ENCODE measurements at regions of chr18 and their contacts with region 1.

Region 1: DNA sequence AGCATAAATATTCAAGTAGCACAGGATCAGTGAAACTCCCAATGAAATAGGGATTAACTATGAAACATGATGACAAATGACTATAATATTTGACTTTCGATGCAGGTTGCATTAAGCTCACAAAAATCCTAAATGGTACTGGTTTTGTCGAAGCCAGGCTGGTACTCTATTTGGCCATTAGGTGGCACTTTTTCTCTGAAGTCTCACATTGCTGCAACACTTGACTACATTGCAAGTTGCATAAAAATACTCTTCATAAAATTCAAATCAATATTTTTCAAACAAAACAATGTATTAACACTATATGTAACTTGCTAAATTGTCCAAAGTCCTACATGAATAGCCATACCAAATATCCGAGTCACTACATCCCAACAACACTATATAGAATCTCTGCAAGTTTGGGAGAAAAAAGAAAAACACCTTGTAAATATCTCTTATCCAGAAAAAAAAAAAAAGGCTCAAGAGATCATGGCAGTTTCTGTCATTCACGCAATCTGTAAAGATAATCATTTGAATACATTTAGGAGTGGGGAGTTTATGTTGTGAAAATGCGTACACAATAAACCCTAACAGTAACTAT is 9.5 kb downstream of the RTTN start:
- DNase-seq: no peak
- ATAC-seq: peak; percentile 31
- H3K4me3 Mint-ChIP-seq: no peak overlapping the region
- H3K27ac Mint-ChIP-seq: no peak overlapping the region
- H3K4me1 Mint-ChIP-seq: peaks cover 48% of the 10 kb centered on the region
- H3K27me3 Mint-ChIP-seq: no peaks in the 10 kb centered on the region

Region 2: DNA sequence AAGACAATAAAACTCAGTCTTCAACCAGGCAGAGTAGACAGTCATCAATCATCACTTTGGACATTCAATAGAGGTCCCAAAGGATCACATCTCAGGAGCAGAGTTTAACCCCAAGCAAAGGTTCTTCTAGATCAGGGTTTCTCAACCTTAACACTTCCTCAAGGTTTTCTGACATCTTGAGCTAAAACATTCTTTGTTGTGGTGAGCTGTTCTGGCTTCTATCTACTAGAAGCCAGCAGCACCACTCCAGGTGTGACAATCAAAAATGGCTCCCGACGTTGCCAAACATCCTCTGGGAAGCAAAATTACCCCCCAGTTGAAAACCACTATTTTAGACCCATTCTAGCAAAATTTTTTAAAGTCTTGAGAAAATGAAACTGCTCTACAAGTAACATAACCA is 12.5 kb before region 1 on chr18:
- CTCF ChIA-PET with region 1: interaction called, 13 read pairs
- DNase-seq: no peak
- ATAC-seq: no peak
- H3K4me3 Mint-ChIP-seq: no peak overlapping the region
- H3K27ac Mint-ChIP-seq: peak overlapping the region; percentile 13
- H3K4me1 Mint-ChIP-seq: peaks cover 15% of the 10 kb centered on the region
- H3K27me3 Mint-ChIP-seq: no peaks in the 10 kb centered on the region

Region 3: DNA sequence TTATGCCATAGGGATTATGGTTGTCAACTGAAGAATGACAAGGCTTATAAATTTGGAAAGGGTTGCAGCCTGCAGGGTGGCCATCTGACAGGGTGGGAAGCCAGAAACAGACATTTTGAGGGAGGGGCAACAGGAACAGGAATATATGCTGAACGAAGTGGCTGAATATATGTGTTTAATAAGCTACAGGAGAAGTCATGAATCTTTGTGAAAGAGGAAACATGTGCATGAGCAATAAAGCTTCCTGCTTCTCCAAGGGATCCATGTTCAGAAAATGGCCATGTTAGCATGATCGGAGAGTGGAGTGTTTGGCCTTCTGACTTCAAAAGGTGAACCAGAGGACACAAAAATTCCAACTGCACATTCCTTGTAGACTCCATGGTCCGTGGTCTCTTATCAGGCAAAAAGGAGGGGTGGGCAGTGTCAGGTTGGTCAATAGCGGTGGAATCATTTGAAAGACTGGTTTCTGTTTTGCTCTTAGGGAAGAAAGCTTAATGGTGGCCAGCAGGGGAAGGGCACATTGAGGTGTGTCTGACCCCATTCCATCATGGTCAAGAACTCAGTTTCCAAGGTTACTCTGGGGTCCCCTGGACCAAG is 237.0 kb after region 1 on chr18:
- CTCF ChIA-PET with region 1: interaction called, 22 read pairs
- DNase-seq: no peak
- ATAC-seq: no peak
- H3K4me3 Mint-ChIP-seq: no peak overlapping the region
- H3K27ac Mint-ChIP-seq: no peak overlapping the region
- H3K4me1 Mint-ChIP-seq: peaks cover 5% of the 10 kb centered on the region
- H3K27me3 Mint-ChIP-seq: peaks cover 4% of the 10 kb centered on the region

Region 4: DNA sequence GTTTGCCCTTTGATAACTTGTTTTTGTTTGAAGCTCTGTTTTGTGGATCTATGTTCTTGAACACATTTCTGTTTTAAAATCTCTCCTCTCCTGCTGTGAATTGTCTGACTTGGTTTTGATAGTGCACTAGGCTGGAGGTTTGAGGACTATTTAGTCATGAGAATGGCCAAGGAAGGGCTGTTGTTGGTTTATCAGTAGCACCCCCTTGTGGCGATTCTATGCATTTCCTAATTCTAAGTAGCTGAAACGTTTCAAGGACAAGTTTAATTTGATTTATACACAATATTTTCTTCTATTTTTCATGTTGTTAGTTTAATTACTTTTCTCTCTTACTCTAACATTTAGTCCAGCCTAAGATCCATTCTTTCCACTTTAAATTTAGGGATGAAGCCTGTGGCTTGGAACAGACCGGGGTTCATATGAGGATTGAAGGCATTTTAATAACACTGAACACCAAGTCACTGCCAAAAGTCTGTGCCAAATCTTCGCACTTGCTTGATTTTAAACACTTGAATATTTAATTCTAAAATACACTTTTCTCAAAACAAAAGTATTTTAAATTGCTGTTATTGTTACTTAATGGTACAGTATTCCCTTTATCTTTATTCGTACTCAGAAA is 258.9 kb after region 1 on chr18:
- CTCF ChIA-PET with region 1: interaction called, 21 read pairs
- DNase-seq: peak; percentile 48
- ATAC-seq: peak; percentile 61
- H3K4me3 Mint-ChIP-seq: no peak overlapping the region
- H3K27ac Mint-ChIP-seq: no peak overlapping the region
- H3K4me1 Mint-ChIP-seq: no peaks in the 10 kb centered on the region
- H3K27me3 Mint-ChIP-seq: peaks cover 12% of the 10 kb centered on the region

Measured in activated CD8-positive, alpha-beta memory T cell treated with anti-CD3 and anti-CD28 coated beads, Interleukin-2, amount 10 ng/mL, durations not matched to agents 7 days and 5 days (primary cell).